ENCODE measurements at regions of chr6 and their contacts with region 1.

Region 1: GRCh38 chr6:85868685-85869084 is 226.0 kb upstream of the SYNCRIP start:
- DNase-seq: no peak
- ATAC-seq: no peak
- H3K4me3 ChIP-seq: no peak overlapping the region
- H3K4me3 Mint-ChIP-seq: no peak overlapping the region
- H3K27ac ChIP-seq: no peak overlapping the region
- H3K27ac Mint-ChIP-seq: no peak overlapping the region
- H3K4me1 ChIP-seq: no peaks in the 10 kb centered on the region
- H3K4me1 Mint-ChIP-seq: no peaks in the 10 kb centered on the region
- H3K27me3 ChIP-seq: no peaks in the 10 kb centered on the region
- H3K27me3 Mint-ChIP-seq: no peaks in the 10 kb centered on the region
- CTCF ChIP-seq: no peak

Region 2: DNA sequence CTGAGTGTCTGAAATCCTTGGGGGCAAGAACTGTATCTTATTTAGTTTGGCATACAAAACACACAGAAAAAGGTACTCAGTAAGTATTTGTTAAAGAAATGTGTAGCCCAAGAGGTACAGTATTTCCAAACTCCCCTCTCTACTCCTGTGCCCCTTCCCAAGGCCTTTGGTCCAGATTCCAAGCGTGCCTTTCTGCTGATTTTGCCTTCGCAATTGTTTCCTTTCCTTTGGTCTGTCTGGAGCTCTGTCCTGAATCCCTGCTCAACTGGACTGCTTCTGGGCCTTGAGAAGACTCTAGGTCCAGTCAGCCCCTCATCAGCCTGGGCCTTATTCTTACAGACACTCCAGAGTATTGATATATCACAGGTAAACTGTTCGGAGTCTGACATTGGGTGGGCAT is 103.8 kb before region 1 on chr6:
- CTCF ChIA-PET with region 1: no interaction called
- POLR2A ChIA-PET with region 1: no interaction called
- intact Hi-C with region 1: no loop called
- DNase-seq: no peak
- ATAC-seq: no peak
- H3K4me3 ChIP-seq: no peak overlapping the region
- H3K4me3 Mint-ChIP-seq: no peak overlapping the region
- H3K27ac ChIP-seq: no peak overlapping the region
- H3K27ac Mint-ChIP-seq: no peak overlapping the region
- H3K4me1 ChIP-seq: no peaks in the 10 kb centered on the region
- H3K4me1 Mint-ChIP-seq: no peaks in the 10 kb centered on the region
- H3K27me3 ChIP-seq: no peaks in the 10 kb centered on the region
- H3K27me3 Mint-ChIP-seq: peaks cover 2% of the 10 kb centered on the region
- CTCF ChIP-seq: no peak

Region 3: DNA sequence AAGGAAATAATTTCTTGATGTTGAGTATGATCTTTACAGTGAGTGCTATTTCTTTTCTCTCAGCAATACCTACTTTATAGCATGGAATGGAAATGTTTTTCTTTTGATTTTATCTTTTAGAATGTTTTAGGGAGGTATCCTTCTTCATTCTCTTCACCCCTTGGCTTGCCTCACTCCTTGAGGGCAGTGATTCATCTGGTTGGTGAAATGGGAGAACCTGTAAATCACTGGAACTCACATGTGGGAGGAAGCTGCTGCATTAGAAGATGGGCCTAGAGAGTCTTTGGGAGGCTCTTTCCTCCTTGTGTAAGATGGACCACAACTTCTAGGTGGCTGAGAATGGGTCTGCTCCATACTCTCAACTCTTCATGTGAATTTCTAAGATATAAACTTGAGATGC is 18.8 kb after region 1 on chr6:
- CTCF ChIA-PET with region 1: no interaction called
- POLR2A ChIA-PET with region 1: no interaction called
- intact Hi-C with region 1: loop called in 1 of 2 experiments (anchors 1 kb)
- DNase-seq: no peak
- ATAC-seq: no peak
- H3K4me3 ChIP-seq: no peak overlapping the region
- H3K4me3 Mint-ChIP-seq: no peak overlapping the region
- H3K27ac ChIP-seq: no peak overlapping the region
- H3K27ac Mint-ChIP-seq: no peak overlapping the region
- H3K4me1 ChIP-seq: no peaks in the 10 kb centered on the region
- H3K4me1 Mint-ChIP-seq: no peaks in the 10 kb centered on the region
- H3K27me3 ChIP-seq: no peaks in the 10 kb centered on the region
- H3K27me3 Mint-ChIP-seq: peaks cover 2% of the 10 kb centered on the region
- CTCF ChIP-seq: no peak